IMR-90 (cell line): ENCODE measurements at regions of chr20 and their contacts with region 1.

Region 1: DNA sequence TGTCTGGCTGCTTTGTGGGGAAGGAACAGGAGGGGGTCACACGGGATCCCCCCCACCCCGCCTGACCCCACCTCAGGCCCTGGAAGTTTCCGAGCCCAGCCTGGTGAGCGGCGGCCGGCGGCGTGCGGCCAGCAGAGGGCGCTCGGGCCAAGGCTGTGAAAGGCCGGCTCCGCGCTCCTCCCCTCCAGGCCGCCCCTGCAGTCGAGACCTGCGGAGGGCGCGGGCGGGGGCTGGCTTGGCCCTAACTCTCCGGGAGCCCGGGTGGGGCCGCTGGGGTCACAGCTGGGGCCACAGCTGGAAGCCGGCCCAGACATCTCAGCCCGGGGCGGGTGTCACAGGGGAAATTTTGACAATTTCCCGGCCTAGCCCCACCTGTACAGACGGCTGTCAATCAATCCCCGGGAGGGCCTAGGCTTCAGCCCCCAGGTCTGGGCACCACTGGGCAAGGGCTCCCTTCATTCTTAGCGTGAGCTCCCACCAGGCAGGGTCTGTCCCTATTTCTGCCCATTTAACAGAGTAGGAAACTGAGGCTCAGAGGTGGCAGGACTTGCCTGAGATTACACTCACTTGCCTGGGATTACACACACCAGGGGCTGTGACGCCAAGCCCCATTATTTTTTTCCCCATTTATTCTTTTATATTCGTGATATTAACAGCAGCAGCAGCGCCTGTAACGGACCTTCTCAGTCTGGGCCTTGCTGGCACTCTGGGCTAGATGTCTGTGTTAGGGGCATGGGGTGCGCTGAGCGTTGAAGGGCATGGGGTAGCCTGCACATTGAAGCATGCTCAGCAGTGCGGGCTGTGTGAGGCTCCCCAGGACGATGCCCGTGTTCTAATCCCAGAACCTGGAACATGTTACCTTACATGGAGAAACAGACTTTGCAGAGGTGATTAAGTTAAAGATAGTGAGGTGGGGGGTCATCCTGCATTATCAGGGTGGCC is 23.0 kb downstream of the ZBP1 start:
- DNase-seq: peak; percentile 17
- ATAC-seq: peak; percentile 94
- H3K4me3 ChIP-seq: no peak overlapping the region
- H3K27ac ChIP-seq: no peak overlapping the region
- H3K4me1 ChIP-seq: no peaks in the 10 kb centered on the region
- H3K27me3 ChIP-seq: peaks cover 13% of the 10 kb centered on the region; the same call in 1 of the 2 replicates
- CTCF ChIP-seq: peak; percentile 84
- POLR2A ChIP-seq: no peak
- RAD21 ChIP-seq: peak; percentile 88

Region 2: GRCh38 chr20:57391074-57391554 is 206.2 kb before region 1 on chr20 and contains the start of gene RBM38:
- CTCF ChIA-PET with region 1: no interaction called
- POLR2A ChIA-PET with region 1: no interaction called
- dilution Hi-C with region 1: no loop called
- in situ Hi-C with region 1: loop called (anchors 10 kb)
- intact Hi-C with region 1: no loop called
- DNase-seq: peak; percentile 49
- ATAC-seq: peak; percentile 96
- H3K4me3 ChIP-seq: peak within 1 kb of the TSS; percentile 99
- H3K27ac ChIP-seq: peak within 1 kb of the TSS; percentile 30; the same call in 1 of the 2 replicates
- H3K4me1 ChIP-seq: peaks cover 9% of the 10 kb centered on the region
- H3K27me3 ChIP-seq: no peaks in the 10 kb centered on the region
- CTCF ChIP-seq: no peak
- POLR2A ChIP-seq: no peak
- RAD21 ChIP-seq: no peak
- total RNA-seq, gene RBM38: 5.2 and 6.9 TPM in 2 replicates

Region 3: DNA sequence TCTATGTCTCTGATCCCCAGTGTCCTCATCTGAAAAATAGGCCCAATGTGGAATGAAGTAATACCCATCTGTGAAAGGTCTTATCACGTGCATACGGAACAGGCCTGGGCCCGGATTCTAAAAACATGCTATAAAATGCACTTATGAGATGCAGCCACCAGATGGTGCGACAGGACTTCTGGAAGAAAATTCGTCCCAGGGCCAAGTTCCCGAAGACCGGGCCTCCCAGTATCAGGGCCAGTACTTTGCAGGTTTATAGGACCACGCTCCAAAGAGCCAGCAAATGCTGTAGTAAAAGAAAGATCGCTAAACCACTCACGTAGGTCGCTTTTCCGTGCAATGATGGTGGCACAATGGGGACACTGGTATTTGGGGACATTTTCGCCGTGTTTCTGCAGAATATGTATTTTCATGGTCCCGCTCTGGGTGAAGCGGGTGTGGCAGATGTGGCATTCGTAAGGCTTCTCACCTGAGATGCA is 83.0 kb before region 1 on chr20:
- CTCF ChIA-PET with region 1: interaction called, 10 read pairs
- POLR2A ChIA-PET with region 1: no interaction called
- dilution Hi-C with region 1: no loop called
- in situ Hi-C with region 1: loop called (anchors 5 kb)
- intact Hi-C with region 1: loop called (anchors 1 kb)
- DNase-seq: peak; percentile 64
- ATAC-seq: peak; percentile 97
- H3K4me3 ChIP-seq: no peak overlapping the region
- H3K27ac ChIP-seq: no peak overlapping the region
- H3K4me1 ChIP-seq: no peaks in the 10 kb centered on the region
- H3K27me3 ChIP-seq: peaks cover 11% of the 10 kb centered on the region
- CTCF ChIP-seq: peak; percentile 90
- POLR2A ChIP-seq: no peak
- RAD21 ChIP-seq: peak; percentile 90

Region 4: DNA sequence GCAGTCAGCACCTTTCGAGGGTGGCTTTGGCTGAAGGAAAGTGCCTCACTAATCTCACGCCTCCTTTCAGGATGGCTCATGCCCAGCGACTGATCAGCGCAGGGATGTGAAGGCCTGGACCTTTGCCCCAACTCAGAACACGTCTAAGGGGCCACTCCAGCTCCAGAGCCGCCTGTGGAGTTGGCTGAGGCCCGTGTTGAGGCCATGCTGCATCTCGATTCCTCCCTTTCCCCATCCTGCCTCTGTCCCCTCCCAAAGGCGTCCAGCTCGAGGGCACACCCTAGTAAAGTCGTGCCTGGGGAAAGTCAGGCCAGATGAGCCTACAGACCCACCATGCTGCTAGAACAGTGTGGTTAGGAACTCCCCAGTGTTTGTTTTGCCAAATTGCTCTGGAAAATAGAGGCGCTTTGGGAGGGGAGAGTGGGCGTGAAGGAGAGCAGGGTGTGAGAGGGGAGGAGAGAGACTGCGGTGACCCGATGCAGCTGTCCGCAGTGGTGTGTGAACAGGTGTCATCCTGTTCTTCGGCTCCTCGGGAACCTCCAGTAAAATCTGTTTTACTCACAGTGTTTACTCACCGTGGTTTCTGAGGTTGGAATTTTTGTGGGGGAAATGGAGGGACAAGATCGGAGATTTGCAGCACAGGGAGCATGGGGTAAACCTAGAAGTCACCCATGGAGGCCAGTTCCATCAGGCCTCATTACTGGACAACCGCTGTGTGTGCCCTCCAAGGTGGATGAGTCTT is 197.5 kb after region 1 on chr20:
- CTCF ChIA-PET with region 1: no interaction called
- POLR2A ChIA-PET with region 1: no interaction called
- dilution Hi-C with region 1: no loop called
- in situ Hi-C with region 1: no loop called
- intact Hi-C with region 1: no loop called
- DNase-seq: peak; percentile 3
- ATAC-seq: no peak
- H3K4me3 ChIP-seq: no peak overlapping the region
- H3K27ac ChIP-seq: no peak overlapping the region
- H3K4me1 ChIP-seq: no peaks in the 10 kb centered on the region
- H3K27me3 ChIP-seq: peaks cover 3% of the 10 kb centered on the region; the same call in 1 of the 2 replicates
- CTCF ChIP-seq: no peak
- POLR2A ChIP-seq: no peak
- RAD21 ChIP-seq: no peak

Region 5: DNA sequence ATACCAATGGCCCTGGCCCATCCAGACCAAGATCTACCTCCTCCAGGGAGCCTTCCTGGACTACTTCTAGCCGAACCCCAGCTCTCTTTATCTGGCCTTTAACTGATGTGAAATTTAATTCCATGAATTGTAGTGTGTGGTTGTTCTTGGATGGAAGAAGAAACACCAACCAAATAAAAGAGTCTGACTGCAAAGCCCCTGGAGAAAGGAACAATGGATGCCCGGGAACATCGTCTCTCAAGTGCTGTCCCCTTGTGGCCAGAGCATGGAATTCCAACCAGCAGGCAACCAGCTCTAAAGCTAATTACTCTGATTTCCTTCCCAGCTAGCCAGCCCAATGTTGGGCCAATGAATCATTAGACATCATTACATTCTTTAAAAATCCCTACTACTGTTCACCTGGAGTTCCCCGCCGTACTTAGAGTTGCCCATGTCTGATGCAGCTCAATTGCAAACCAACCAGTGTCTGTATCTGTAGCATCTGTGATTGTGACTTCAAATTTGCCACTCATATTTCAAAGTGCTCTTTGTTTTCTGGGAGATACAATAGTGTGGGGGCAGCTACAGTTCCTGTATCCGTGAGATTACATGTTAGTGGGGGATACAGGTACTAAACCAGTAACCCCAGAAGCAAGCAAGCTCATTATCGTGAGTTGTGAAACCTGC is 490.1 kb after region 1 on chr20:
- CTCF ChIA-PET with region 1: no interaction called
- POLR2A ChIA-PET with region 1: no interaction called
- dilution Hi-C with region 1: no loop called
- in situ Hi-C with region 1: no loop called
- intact Hi-C with region 1: loop called (anchors 1 kb)
- DNase-seq: peak; percentile 27
- ATAC-seq: peak; percentile 72
- H3K4me3 ChIP-seq: no peak overlapping the region
- H3K27ac ChIP-seq: no peak overlapping the region
- H3K4me1 ChIP-seq: no peaks in the 10 kb centered on the region
- H3K27me3 ChIP-seq: no peaks in the 10 kb centered on the region; the same call in 1 of the 2 replicates
- CTCF ChIP-seq: peak; percentile 73
- POLR2A ChIP-seq: no peak
- RAD21 ChIP-seq: peak; percentile 70

Region 6: DNA sequence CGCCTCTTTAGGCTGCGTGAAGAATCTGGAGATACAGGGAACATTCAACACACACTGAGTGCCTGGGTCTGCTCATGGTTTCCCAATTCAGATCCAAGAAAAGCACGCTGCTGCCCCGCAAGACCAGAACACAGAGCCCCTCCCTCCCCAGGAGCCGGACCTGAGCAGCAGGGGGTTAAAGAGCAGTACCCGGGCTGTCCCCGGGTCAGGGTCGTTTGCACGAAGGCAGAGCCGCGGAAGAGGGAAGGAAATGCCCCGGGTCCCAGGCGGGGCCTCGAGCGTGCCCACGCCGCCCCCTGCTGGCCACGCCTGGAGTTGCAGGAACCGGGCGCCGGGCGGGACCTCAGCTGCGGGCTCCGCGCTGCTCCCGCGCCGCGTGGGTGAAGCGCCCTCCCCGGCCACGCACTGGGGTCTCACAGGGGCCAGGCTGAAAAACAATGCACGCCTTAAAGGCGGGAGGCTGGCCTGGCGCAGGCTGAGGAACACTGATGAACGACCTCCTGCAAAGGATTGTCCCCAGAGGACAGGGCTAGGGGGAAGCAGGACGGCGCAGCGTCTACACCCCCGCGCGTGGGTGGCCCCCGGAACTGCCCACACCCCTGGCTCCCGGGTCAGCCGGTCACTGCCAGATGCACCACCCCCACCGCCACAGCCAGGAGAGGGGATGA is 582.3 kb after region 1 on chr20:
- CTCF ChIA-PET with region 1: interaction called, 3 read pairs
- POLR2A ChIA-PET with region 1: no interaction called
- dilution Hi-C with region 1: no loop called
- in situ Hi-C with region 1: loop called (anchors 10 kb)
- intact Hi-C with region 1: loop called (anchors 1 kb)
- DNase-seq: no peak
- ATAC-seq: peak; percentile 98
- H3K4me3 ChIP-seq: peak overlapping the region; percentile 25; the same call in 1 of the 2 replicates
- H3K27ac ChIP-seq: no peak overlapping the region
- H3K4me1 ChIP-seq: peaks cover 2% of the 10 kb centered on the region; the same call in 1 of the 2 replicates
- H3K27me3 ChIP-seq: peaks cover 32% of the 10 kb centered on the region
- CTCF ChIP-seq: peak; percentile 88
- POLR2A ChIP-seq: no peak
- RAD21 ChIP-seq: peak; percentile 81

Region 7: DNA sequence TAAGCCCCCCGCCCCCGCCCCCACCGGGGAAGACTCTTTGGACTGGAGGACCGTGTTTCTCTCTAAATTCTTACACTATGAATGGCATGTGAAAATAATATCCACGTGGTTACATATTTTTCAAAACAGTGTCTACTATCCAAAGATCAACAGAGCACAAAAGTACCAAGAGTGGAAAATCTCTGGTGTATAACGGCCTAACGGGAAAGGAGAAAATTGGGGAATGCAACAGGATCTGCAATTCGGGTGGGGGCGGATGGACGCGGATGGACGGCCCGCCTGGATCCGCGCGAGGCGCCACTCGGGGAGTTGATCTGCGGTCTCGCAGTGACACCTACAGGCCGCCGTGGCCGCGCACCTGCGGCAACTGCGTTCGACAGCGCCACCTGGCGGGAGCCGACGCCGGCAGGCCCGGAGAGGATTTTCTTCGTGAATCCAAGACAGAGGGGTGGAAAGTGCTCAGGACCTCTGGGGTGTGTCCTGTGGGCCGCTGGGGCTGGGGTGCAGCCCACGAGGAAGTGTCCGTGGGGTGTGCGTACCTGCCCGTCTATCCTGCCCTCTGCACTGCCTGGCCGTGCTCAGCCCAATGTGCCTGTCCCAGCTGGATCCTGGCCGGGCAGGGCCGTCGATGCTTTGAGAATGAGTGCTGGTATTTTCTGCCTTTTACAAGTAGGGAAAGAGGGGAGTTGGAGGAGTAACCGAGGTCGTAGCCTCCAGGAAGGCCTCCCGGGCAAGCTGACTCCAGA is 612.6 kb after region 1 on chr20:
- CTCF ChIA-PET with region 1: no interaction called
- POLR2A ChIA-PET with region 1: no interaction called
- dilution Hi-C with region 1: no loop called
- in situ Hi-C with region 1: loop called (anchors 5 kb)
- intact Hi-C with region 1: loop called (anchors 1 kb)
- DNase-seq: peak; percentile 65
- ATAC-seq: peak; percentile 96
- H3K4me3 ChIP-seq: no peak overlapping the region
- H3K27ac ChIP-seq: no peak overlapping the region
- H3K4me1 ChIP-seq: no peaks in the 10 kb centered on the region
- H3K27me3 ChIP-seq: peaks cover 22% of the 10 kb centered on the region
- CTCF ChIP-seq: peak; percentile 100; the same call in 1 of the 2 replicates
- POLR2A ChIP-seq: 0 out of 2 replicates have a peak, but pooled peaks have one; percentile 50
- RAD21 ChIP-seq: peak; percentile 98